ENCODE measurements at regions of chr6 and their contacts with region 1.

Region 1: DNA sequence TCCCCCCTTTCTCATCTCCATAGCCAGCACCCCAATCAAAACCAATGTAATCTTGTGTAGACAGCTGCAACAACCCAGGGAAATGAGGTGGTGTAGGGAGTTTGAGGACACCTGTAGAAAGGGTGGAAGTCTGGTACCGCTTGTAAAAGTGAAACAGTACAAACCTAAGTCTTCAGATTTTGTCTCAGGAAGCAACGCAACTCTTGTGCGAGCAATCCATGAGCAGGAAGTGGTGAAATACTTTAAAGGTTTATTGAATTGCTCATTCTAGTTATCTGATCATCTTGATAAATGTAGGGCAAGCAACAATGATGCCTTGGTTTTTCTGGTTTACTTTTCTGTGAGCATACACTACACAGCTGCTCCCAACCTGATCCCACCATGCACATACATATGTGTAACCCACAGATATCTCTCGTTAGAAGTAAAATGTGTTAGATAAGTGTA is 71.1 kb upstream of the THEMIS start:
- DNase-seq: peak; percentile 89
- H3K4me3 Mint-ChIP-seq: peak overlapping the region; percentile 87
- H3K27ac Mint-ChIP-seq: peak overlapping the region; percentile 96
- H3K4me1 Mint-ChIP-seq: peaks cover 48% of the 10 kb centered on the region
- H3K27me3 Mint-ChIP-seq: no peaks in the 10 kb centered on the region

Region 2: DNA sequence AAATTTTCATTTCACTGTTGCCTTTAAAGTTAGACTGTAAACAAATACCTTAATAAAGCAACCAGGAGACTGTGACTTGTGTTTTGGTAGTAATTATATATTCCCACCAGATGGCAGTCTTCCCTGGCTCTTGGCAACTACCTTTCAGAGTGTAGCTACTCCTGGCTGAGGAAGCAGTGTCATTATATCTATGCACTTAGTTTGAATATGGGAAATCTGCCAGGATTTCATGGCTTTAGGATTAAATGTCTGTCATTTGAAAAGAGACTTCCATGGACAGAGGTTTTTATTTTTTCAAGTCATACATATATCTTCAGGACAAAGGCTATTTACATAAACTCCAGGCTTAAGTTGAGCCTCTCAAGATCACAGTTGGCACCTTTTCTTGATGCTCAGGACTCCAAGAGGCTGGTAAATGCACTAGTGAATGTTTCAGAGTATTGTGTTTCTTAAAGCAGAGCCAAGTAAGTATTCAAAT is 234.9 kb before region 1 on chr6:
- intact Hi-C with region 1: loop called (anchors 5 kb)
- DNase-seq: peak; percentile 82
- H3K4me3 Mint-ChIP-seq: no peak overlapping the region
- H3K27ac Mint-ChIP-seq: peak overlapping the region; percentile 25
- H3K4me1 Mint-ChIP-seq: peaks cover 12% of the 10 kb centered on the region
- H3K27me3 Mint-ChIP-seq: no peaks in the 10 kb centered on the region

Region 3: GRCh38 chr6:127879685-127880084 is 92.3 kb before region 1 on chr6:
- intact Hi-C with region 1: loop called (anchors 1 kb)
- DNase-seq: no peak
- H3K4me3 Mint-ChIP-seq: peak overlapping the region; percentile 61
- H3K27ac Mint-ChIP-seq: no peak overlapping the region
- H3K4me1 Mint-ChIP-seq: peaks cover 43% of the 10 kb centered on the region
- H3K27me3 Mint-ChIP-seq: no peaks in the 10 kb centered on the region

Region 4: DNA sequence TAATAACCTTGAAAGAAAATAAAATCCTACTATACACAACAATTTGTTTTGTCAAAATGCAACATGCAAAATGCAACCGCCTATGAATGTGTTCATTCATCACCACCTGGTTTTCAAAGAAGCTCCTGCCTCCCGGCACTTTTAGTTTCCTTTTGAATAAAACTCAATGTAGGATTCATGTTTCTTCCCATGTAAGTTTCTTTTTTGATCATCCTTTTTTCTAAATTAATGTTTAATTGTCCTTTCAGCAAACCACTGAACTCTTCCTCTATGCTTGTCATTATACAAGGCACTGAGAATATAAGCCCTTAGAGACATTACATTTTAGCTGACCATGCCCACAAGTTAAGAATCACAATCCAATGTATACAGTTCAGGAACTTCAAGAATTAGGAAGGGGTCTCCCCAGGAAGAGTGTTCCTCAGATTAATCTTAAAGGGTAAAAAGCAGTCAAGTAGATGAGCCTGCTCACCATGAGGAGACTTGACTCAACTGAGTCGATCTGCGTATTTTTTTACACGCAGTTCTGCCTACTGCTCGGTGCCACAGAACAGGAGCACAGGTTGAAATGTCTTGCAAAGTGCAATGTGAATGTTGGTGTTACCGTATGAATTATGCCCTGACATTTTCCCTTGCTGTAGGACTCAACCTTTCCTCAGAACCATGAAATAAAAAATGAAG is 63.9 kb before region 1 on chr6:
- intact Hi-C with region 1: loop called (anchors 1 kb)
- DNase-seq: peak; percentile 71
- H3K4me3 Mint-ChIP-seq: peak overlapping the region; percentile 57
- H3K27ac Mint-ChIP-seq: peak overlapping the region; percentile 83
- H3K4me1 Mint-ChIP-seq: peaks cover 31% of the 10 kb centered on the region
- H3K27me3 Mint-ChIP-seq: no peaks in the 10 kb centered on the region

Region 5: GRCh38 chr6:127938701-127939100 is 33.3 kb before region 1 on chr6:
- intact Hi-C with region 1: loop called (anchors 1 kb)
- DNase-seq: no peak
- H3K4me3 Mint-ChIP-seq: no peak overlapping the region
- H3K27ac Mint-ChIP-seq: peak overlapping the region; percentile 61
- H3K4me1 Mint-ChIP-seq: peaks cover 46% of the 10 kb centered on the region
- H3K27me3 Mint-ChIP-seq: no peaks in the 10 kb centered on the region

Region 6: DNA sequence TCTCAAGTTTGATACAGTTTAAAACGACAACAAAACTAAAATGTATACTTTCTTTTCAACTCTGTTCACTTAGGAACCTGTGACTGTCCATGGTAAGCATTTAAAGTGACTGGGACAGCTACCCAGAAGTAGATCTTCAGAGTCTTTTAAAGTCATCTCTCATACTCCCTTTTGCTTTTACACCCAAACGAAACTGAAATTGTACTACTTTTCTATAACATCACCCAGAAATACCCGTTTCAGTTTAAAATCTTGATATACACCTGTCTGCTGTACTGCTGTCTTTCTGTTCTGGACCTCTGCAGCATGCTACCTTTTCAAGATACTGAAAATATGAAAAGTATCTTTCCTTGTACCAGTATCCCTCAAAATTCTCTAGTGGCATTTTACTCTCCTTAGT is 99.2 kb after region 1 on chr6:
- intact Hi-C with region 1: no loop called
- DNase-seq: no peak
- H3K4me3 Mint-ChIP-seq: no peak overlapping the region
- H3K27ac Mint-ChIP-seq: no peak overlapping the region
- H3K4me1 Mint-ChIP-seq: no peaks in the 10 kb centered on the region
- H3K27me3 Mint-ChIP-seq: no peaks in the 10 kb centered on the region

Region 7: DNA sequence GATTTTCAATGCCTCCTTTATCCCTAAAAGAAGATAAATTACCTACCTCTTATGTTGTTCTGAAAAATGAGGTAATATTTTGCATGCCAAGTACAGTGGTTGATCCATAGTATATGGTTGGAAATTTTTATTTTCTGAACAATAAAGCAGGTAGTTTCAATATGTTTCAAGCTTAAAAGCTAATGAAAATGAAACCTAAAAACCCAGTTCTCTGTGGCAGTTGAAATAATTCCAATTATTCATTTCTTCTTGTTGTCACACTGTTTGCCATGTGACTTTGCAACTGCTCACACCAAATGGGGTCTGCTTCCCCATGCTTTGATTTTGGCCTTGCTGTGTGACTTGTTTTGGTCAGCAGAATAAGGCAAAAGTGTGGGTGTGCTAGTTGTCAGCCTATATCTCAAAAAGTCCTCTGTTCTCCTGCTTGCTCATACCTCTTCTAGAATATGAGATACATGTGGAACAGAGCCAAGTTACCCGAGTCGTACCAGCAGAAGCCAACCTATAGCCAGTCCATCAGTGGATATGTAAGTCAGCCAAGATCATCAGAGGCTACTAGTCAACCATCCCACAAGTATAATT is 126.1 kb after region 1 on chr6:
- intact Hi-C with region 1: loop called (anchors 5 kb)
- DNase-seq: peak; percentile 57
- H3K4me3 Mint-ChIP-seq: no peak overlapping the region
- H3K27ac Mint-ChIP-seq: peak overlapping the region; percentile 64
- H3K4me1 Mint-ChIP-seq: peaks cover 20% of the 10 kb centered on the region
- H3K27me3 Mint-ChIP-seq: no peaks in the 10 kb centered on the region

Region 8: DNA sequence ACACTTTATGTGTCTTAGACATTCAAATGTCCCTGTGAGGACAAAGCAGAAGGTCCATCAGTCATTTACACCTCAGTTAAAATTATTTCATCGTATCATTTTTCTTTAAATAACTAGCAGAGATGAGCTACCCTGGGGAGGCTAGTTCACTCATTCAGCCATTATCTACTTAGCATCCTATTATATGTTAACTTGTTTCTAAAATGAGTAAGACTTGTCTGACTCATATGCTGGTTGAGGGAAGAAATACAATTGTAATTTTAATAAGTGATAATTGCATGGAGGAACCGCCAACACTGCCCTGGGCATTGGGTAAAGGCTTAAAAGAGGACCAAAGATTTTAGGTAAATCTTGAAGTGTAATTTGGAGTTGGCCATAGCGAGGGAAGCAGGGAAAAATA is 560.9 kb after region 1 on chr6:
- intact Hi-C with region 1: no loop called
- DNase-seq: no peak
- H3K4me3 Mint-ChIP-seq: no peak overlapping the region
- H3K27ac Mint-ChIP-seq: no peak overlapping the region
- H3K4me1 Mint-ChIP-seq: peaks cover 3% of the 10 kb centered on the region
- H3K27me3 Mint-ChIP-seq: peaks cover 15% of the 10 kb centered on the region

Region 9: GRCh38 chr6:129490521-129491245 is 1518.7 kb after region 1 on chr6:
- intact Hi-C with region 1: loop called (anchors 2 kb)
- DNase-seq: peak; percentile 91
- H3K4me3 Mint-ChIP-seq: peak overlapping the region; percentile 84
- H3K27ac Mint-ChIP-seq: peak overlapping the region; percentile 98
- H3K4me1 Mint-ChIP-seq: peaks cover 61% of the 10 kb centered on the region
- H3K27me3 Mint-ChIP-seq: no peaks in the 10 kb centered on the region